ENCODE measurements at regions of chr1 and their contacts with region 1.

Region 1: DNA sequence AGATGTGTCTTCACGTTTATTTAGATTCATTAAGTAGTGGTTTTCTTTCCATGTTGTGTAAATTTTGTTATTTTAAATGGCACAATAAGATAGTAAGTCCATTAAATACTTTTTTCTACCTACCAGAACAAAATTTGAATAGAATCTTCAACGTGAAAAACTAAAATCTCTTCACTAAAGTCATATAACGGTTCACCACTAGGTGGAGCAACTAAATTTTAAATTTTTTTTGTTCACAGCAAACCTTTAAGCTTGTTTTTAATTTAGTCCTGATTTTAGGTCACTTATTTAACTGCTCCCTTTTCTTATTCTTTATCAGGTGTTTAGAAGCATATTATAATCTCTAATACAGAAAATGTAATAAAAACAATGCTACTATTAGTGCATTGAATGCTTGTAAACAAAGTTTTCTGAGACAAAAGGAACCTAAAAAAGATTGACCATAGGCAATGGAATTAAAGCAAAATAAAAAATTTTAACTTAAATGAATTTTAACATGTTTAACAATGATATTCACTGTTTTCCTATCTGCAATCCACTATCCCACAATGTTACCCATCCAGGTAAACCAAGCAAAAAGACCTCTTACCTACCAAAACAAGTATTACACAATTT is 28.3 kb upstream of the PKN2 start:
- DNase-seq: no peak
- ATAC-seq: no peak

Region 2: DNA sequence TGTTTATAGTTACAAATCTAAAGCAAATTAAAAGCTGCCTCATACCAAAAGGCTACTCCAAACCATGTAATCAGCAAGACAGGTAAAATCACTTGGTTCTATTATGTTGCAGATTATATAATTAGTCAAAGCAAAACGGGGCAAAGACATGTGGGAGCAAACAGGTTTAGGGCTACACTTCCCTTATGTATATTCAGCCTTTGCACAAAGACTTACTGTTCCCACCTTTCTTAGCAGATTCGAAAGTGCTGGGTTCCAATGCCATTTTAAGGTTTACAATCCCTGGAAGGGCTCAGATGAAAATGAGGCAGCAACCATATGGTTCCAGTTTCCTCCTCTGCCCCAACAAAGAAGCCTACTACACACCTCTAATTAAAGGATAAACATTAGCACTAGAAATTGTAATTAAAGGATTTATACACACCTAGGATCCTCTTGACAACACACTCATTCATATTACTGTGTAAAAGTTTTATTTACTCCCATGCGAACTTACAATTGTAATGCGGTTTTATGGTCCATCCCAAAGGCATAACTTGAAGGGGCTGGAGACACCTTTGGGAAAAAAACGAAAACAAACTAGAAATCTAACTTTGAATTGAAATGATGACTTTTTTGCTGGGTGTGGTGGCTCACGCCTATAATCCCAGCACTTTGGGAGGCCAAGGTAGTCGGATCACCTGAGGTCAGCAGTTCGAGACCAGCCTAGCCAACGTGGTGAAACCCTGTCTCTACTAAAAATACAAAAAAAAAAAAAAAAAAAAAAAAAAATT is 89.0 kb before region 1 on chr1:
- intact Hi-C with region 1: no loop called
- DNase-seq: no peak
- ATAC-seq: no peak

Region 3: GRCh38 chr1:88791192-88791591 is 135.4 kb after region 1 on chr1:
- intact Hi-C with region 1: no loop called
- DNase-seq: no peak
- ATAC-seq: no peak

Region 4: GRCh38 chr1:88877382-88877825 is 221.6 kb after region 1 on chr1:
- intact Hi-C with region 1: loop called (anchors 10 kb)
- DNase-seq: no peak
- ATAC-seq: peak; percentile 19

Measured in left ventricle myocardium superior (tissue), 1 donor.